ENCODE measurements at regions of chr14 and their contacts with region 1.

Region 1: GRCh38 chr14:70972107-70972976 is 65.1 kb downstream of the PCNX1 start:
- DNase-seq: peak; percentile 69 to 79 (median 76)
- H3K4me3 ChIP-seq: no peak overlapping the region
- H3K4me3 Mint-ChIP-seq: no peak overlapping the region
- H3K27ac ChIP-seq: peak overlapping the region in 1 of 2 donors; percentile 2
- H3K27ac Mint-ChIP-seq: peak overlapping the region in 2 of 7 donors; percentile 6 to 15
- H3K4me1 ChIP-seq: no peaks in the 10 kb centered on the region
- H3K4me1 Mint-ChIP-seq: peaks cover 2% of the 10 kb centered on the region
- H3K27me3 ChIP-seq: no peaks in the 10 kb centered on the region
- H3K27me3 Mint-ChIP-seq: no peaks in the 10 kb centered on the region
- CTCF ChIP-seq: peak; percentile 82

Region 2: GRCh38 chr14:70600382-70601157 is 371.8 kb before region 1 on chr14 and contains the start of gene MED6:
- intact Hi-C with region 1: loop called in 1 of 2 experiments (anchors 10 kb)
- DNase-seq: peak; percentile 84 to 89 (median 85)
- H3K4me3 ChIP-seq: peak within 1 kb of the TSS; percentile 90 to 98 (median 95)
- H3K4me3 Mint-ChIP-seq: peak within 1 kb of the TSS; percentile 92 to 97
- H3K27ac ChIP-seq: peak within 1 kb of the TSS; percentile 22 to 94
- H3K27ac Mint-ChIP-seq: peak within 1 kb of the TSS; percentile 93 to 99 (median 96)
- H3K4me1 ChIP-seq: peaks cover 15 to 23% of the 10 kb centered on the region in 2 donors
- H3K4me1 Mint-ChIP-seq: peaks cover 20% of the 10 kb centered on the region
- H3K27me3 ChIP-seq: peaks cover 9 to 11% of the 10 kb centered on the region in 2 donors
- H3K27me3 Mint-ChIP-seq: peaks cover 2 to 12% (median 11%) of the 10 kb centered on the region in 3 donors
- CTCF ChIP-seq: no peak
- polyA plus RNA-seq, gene MED6: 11.9 to 22.3 (median 19.4) TPM

Region 3: DNA sequence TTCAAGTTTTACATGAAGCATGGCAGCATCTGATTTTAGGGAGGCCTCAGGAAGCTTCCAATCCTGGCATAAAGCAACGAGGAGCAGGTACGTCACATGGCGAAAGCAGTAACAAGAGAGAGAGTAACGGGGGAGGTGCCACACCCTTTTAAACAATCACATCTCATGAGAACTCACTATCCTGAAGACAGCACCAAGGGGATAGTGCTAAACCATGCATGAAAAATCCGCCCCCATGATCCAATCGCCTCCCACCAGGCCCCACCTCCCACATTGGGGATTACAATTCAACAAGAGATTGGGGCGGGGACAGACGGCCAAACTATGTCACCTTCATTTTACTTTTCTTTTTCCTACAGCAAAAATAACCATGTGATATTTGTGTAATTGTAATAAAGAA is 155.8 kb before region 1 on chr14:
- intact Hi-C with region 1: loop called in 1 of 2 experiments (anchors 5 kb)
- DNase-seq: no peak
- H3K4me3 ChIP-seq: no peak overlapping the region
- H3K4me3 Mint-ChIP-seq: no peak overlapping the region
- H3K27ac ChIP-seq: no peak overlapping the region
- H3K27ac Mint-ChIP-seq: no peak overlapping the region
- H3K4me1 ChIP-seq: peaks cover 1 to 4% of the 10 kb centered on the region in 2 donors
- H3K4me1 Mint-ChIP-seq: peaks cover 12% of the 10 kb centered on the region
- H3K27me3 ChIP-seq: peaks cover 31 to 43% of the 10 kb centered on the region in 2 donors
- H3K27me3 Mint-ChIP-seq: peaks cover 15 to 36% (median 22%) of the 10 kb centered on the region in 3 donors
- CTCF ChIP-seq: no peak

Region 4: GRCh38 chr14:70873627-70874026 is 98.7 kb before region 1 on chr14:
- intact Hi-C with region 1: loop called in 1 of 2 experiments (anchors 10 kb)
- DNase-seq: peak; percentile 35 to 65 (median 51)
- H3K4me3 ChIP-seq: no peak overlapping the region
- H3K4me3 Mint-ChIP-seq: no peak overlapping the region
- H3K27ac ChIP-seq: no peak overlapping the region
- H3K27ac Mint-ChIP-seq: peak overlapping the region in 2 of 7 donors; percentile 27 to 80
- H3K4me1 ChIP-seq: peaks cover 2 to 14% of the 10 kb centered on the region in 2 donors
- H3K4me1 Mint-ChIP-seq: peaks cover 13% of the 10 kb centered on the region
- H3K27me3 ChIP-seq: no peaks in the 10 kb centered on the region
- H3K27me3 Mint-ChIP-seq: peaks cover 0 to 3% (median 0%) of the 10 kb centered on the region in 3 donors
- CTCF ChIP-seq: peak; percentile 49

Region 5: DNA sequence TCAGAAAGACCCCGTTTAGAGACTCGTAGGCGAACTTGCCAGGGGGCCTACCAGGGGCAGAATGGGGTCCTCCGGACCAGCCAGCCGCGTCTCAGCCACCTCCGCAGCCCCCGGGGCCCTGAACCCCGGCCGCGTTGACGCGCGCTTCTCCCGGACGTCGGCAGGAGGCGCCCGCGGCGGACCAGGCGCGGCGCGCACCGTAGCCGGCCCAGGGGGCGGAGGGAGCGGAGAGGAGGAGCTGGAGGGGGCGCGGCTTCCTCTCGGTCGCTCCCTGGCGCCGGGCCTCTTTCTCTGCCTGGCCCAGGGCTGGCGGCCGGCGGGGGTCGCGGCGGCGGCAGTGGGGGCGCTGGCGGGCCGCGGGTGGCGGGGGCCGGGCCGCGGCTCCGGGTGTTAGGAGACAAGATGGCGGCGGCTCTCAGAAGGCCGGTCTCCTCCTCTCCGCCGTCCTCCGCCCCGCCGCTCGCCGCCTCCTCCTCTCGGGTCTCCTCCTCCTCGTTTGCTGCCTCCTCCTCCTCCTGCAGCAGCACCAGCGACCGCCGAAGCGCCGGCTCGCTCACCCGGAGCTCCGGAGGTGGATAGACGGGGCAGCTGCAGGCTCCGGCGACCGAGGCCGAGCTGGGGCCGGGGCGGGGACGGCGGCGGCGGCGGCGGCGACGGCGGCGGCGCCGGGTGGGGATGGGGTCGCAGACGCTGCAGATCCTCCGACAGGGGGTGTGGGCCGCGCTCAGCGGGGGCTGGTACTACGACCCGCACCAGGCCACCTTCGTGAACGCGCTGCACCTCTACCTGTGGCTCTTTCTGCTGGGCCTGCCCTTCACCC is 65.0 kb before region 1 on chr14 and contains the start of gene PCNX1:
- intact Hi-C with region 1: loop called (anchors 10 kb)
- DNase-seq: peak; percentile 76 to 82 (median 80)
- H3K4me3 ChIP-seq: peak within 1 kb of the TSS; percentile 80 to 87 (median 84)
- H3K4me3 Mint-ChIP-seq: peak within 1 kb of the TSS; percentile 88 to 96
- H3K27ac ChIP-seq: peak within 1 kb of the TSS; percentile 83 to 90
- H3K27ac Mint-ChIP-seq: peak within 1 kb of the TSS; percentile 82 to 94 (median 91)
- H3K4me1 ChIP-seq: peaks cover 39 to 46% of the 10 kb centered on the region in 2 donors
- H3K4me1 Mint-ChIP-seq: peaks cover 47% of the 10 kb centered on the region
- H3K27me3 ChIP-seq: no peaks in the 10 kb centered on the region
- H3K27me3 Mint-ChIP-seq: peaks cover 0 to 2% (median 0%) of the 10 kb centered on the region in 3 donors
- CTCF ChIP-seq: peak; percentile 85
- polyA plus RNA-seq, gene PCNX1: 7.3 to 26.7 (median 8.1) TPM

Measured in CD14-positive monocyte (primary cell).